ENCODE measurements at regions of chr9 and their contacts with region 1.

Region 1: GRCh38 chr9:84697509-84698114 is 28.1 kb downstream of the NTRK2 start:
- DNase-seq: peak; percentile 71
- H3K4me3 Mint-ChIP-seq: no peak overlapping the region
- H3K27ac Mint-ChIP-seq: no peak overlapping the region
- H3K4me1 Mint-ChIP-seq: peaks cover 5% of the 10 kb centered on the region
- H3K27me3 Mint-ChIP-seq: no peaks in the 10 kb centered on the region
- CTCF ChIP-seq: peak; percentile 67

Region 2: DNA sequence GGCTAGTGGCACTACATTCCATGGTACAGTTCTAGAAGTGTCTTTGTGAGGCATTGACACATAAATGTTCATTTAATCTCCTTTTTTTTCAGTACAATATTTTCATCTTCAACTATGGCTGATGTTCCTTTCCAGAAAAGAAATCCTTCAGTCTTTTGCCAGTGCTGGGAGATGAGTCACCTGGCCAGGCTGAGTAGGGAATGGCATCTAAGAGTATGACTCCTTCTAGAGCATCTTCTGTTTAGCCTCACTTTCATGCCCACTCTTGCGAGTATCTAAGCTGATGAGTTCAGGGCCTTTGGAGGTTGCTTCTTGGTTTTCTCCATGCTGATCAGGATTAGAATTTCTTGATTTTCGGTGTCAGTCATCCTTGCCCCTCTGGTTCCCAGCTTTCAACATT is 481.5 kb before region 1 on chr9:
- CTCF ChIA-PET with region 1: no interaction called
- POLR2A ChIA-PET with region 1: no interaction called
- intact Hi-C with region 1: no loop called
- DNase-seq: peak; percentile 8
- H3K4me3 Mint-ChIP-seq: no peak overlapping the region
- H3K27ac Mint-ChIP-seq: no peak overlapping the region
- H3K4me1 Mint-ChIP-seq: peaks cover 6% of the 10 kb centered on the region
- H3K27me3 Mint-ChIP-seq: no peaks in the 10 kb centered on the region
- CTCF ChIP-seq: no peak

Region 3: GRCh38 chr9:84261082-84261746 is 436.4 kb before region 1 on chr9:
- CTCF ChIA-PET with region 1: no interaction called
- POLR2A ChIA-PET with region 1: no interaction called
- intact Hi-C with region 1: no loop called
- DNase-seq: peak; percentile 82
- H3K4me3 Mint-ChIP-seq: no peak overlapping the region
- H3K27ac Mint-ChIP-seq: no peak overlapping the region
- H3K4me1 Mint-ChIP-seq: peaks cover 11% of the 10 kb centered on the region
- H3K27me3 Mint-ChIP-seq: no peaks in the 10 kb centered on the region
- CTCF ChIP-seq: peak; percentile 79

Region 4: GRCh38 chr9:84781458-84781857 is 83.8 kb after region 1 on chr9:
- CTCF ChIA-PET with region 1: interaction called, 60 read pairs
- POLR2A ChIA-PET with region 1: interaction called, 3 read pairs
- intact Hi-C with region 1: loop called (anchors 1 kb)
- DNase-seq: peak; percentile 40
- H3K4me3 Mint-ChIP-seq: no peak overlapping the region
- H3K27ac Mint-ChIP-seq: no peak overlapping the region
- H3K4me1 Mint-ChIP-seq: no peaks in the 10 kb centered on the region
- H3K27me3 Mint-ChIP-seq: peaks cover 13% of the 10 kb centered on the region
- CTCF ChIP-seq: peak; percentile 50

Region 5: DNA sequence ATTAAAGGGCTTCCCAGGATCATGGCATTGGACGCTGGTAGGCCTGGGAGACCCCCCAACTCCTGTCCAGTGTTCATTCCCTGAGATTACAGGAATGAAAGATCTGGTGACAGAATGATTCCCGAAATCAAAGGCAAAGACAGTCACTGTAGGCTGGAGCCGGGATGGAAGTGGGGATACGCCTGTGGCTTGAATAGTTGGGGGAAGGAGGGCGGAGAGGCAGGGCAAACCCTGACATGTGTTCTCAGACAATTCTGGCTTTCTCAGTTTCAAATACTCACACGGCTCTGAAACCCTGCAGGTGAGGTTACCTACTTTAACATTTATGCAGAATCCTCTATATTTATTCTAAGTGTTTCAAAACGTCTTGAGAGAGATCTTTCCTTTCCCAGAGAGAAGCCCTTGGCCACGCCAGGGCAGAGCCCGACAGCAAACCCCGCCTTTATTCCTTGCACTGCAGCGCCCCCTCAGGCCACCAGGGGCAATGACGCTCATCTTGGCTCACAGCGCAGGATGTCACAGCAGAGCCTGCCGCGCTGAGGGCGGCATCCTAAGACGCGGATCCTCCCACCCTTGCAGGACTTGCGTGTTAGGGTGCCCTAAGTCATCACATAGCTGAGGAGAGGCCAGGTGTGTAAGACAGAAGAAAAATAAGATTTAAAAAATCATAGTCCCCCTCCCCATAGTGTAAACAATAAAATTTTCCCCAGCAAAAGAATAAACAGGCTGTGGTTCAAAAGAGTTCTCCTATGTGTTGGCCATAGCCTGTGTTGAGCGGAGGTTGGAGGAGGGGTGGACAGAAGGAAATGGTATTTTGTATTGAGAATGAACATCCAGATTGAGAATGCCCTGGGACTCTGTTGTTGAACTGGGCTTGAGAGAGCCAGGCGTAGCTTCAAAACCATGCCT is 256.4 kb after region 1 on chr9:
- CTCF ChIA-PET with region 1: interaction called, 36 read pairs
- POLR2A ChIA-PET with region 1: no interaction called
- intact Hi-C with region 1: loop called (anchors 1 kb)
- DNase-seq: peak; percentile 75
- H3K4me3 Mint-ChIP-seq: no peak overlapping the region
- H3K27ac Mint-ChIP-seq: no peak overlapping the region
- H3K4me1 Mint-ChIP-seq: peaks cover 7% of the 10 kb centered on the region
- H3K27me3 Mint-ChIP-seq: no peaks in the 10 kb centered on the region
- CTCF ChIP-seq: peak; percentile 90

Region 6: DNA sequence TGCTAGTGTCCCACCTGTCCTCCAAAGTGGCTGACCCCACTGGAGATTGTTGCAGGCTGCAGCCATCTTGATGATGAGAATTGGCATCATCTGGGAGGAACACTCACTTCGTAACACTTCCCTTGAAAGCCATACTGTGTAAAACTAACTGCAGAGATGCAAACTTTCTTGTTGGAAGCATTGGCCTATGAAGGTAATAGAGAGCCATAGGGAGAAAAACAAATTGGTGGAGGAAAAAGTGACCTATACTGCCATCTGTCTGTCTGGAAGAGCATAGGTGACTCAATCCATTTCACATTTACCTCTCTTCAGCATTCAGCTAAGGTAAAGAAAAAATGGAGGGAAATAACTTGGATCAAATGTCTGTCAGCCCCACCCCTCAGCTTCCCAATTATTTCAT is 445.4 kb after region 1 on chr9:
- CTCF ChIA-PET with region 1: interaction called, 56 read pairs
- POLR2A ChIA-PET with region 1: no interaction called
- intact Hi-C with region 1: loop called (anchors 1 kb)
- DNase-seq: peak; percentile 37
- H3K4me3 Mint-ChIP-seq: no peak overlapping the region
- H3K27ac Mint-ChIP-seq: no peak overlapping the region
- H3K4me1 Mint-ChIP-seq: peaks cover 15% of the 10 kb centered on the region
- H3K27me3 Mint-ChIP-seq: no peaks in the 10 kb centered on the region
- CTCF ChIP-seq: peak; percentile 50

Region 7: GRCh38 chr9:85502814-85503655 is 805.4 kb after region 1 on chr9:
- CTCF ChIA-PET with region 1: no interaction called
- POLR2A ChIA-PET with region 1: no interaction called
- intact Hi-C with region 1: no loop called
- DNase-seq: no peak
- H3K4me3 Mint-ChIP-seq: no peak overlapping the region
- H3K27ac Mint-ChIP-seq: no peak overlapping the region
- H3K4me1 Mint-ChIP-seq: no peaks in the 10 kb centered on the region
- H3K27me3 Mint-ChIP-seq: peaks cover 13% of the 10 kb centered on the region
- CTCF ChIP-seq: no peak

Region 8: GRCh38 chr9:85610074-85610860 is 912.7 kb after region 1 on chr9:
- CTCF ChIA-PET with region 1: interaction called, 4 read pairs
- POLR2A ChIA-PET with region 1: no interaction called
- intact Hi-C with region 1: loop called (anchors 5 kb)
- DNase-seq: peak; percentile 78
- H3K4me3 Mint-ChIP-seq: peak overlapping the region; percentile 69
- H3K27ac Mint-ChIP-seq: peak overlapping the region; percentile 61
- H3K4me1 Mint-ChIP-seq: peaks cover 6% of the 10 kb centered on the region
- H3K27me3 Mint-ChIP-seq: no peaks in the 10 kb centered on the region
- CTCF ChIP-seq: peak; percentile 61

Measured in MCF 10A (cell line).